ENCODE measurements at regions of chr1 and their contacts with region 1.

Region 1: GRCh38 chr1:234683861-234684632 is 74.1 kb upstream of the IRF2BP2 start:
- DNase-seq: peak; percentile 100
- H3K4me3 Mint-ChIP-seq: no peak overlapping the region
- H3K27ac Mint-ChIP-seq: peak overlapping the region; percentile 27
- H3K4me1 Mint-ChIP-seq: peaks cover 10% of the 10 kb centered on the region
- H3K27me3 Mint-ChIP-seq: no peaks in the 10 kb centered on the region
- CTCF ChIP-seq: no peak

Region 2: GRCh38 chr1:234670967-234671626 is 12.9 kb before region 1 on chr1:
- CTCF ChIA-PET with region 1: interaction called, 4 read pairs
- POLR2A ChIA-PET with region 1: interaction called, 11 read pairs
- intact Hi-C with region 1: loop called (anchors 1 kb)
- DNase-seq: peak; percentile 37
- H3K4me3 Mint-ChIP-seq: no peak overlapping the region
- H3K27ac Mint-ChIP-seq: no peak overlapping the region
- H3K4me1 Mint-ChIP-seq: no peaks in the 10 kb centered on the region
- H3K27me3 Mint-ChIP-seq: no peaks in the 10 kb centered on the region
- CTCF ChIP-seq: no peak

Region 3: GRCh38 chr1:234875953-234876855 is 192.2 kb after region 1 on chr1:
- CTCF ChIA-PET with region 1: no interaction called
- POLR2A ChIA-PET with region 1: no interaction called
- intact Hi-C with region 1: no loop called
- DNase-seq: peak; percentile 57
- H3K4me3 Mint-ChIP-seq: no peak overlapping the region
- H3K27ac Mint-ChIP-seq: peak overlapping the region; percentile 28
- H3K4me1 Mint-ChIP-seq: no peaks in the 10 kb centered on the region
- H3K27me3 Mint-ChIP-seq: no peaks in the 10 kb centered on the region
- CTCF ChIP-seq: no peak

Measured in MCF 10A (cell line).